Activated CD4-positive, alpha-beta T cell treated with anti-CD3 and anti-CD28 coated beads for 36 hours (primary cell): ENCODE measurements at regions of chr4 and their contacts with region 1.

Region 1: GRCh38 chr4:70993181-70994068 is at the start of gene DCK:
- DNase-seq: peak; percentile 91
- ATAC-seq: peak; percentile 86
- H3K4me3 Mint-ChIP-seq: peak within 1 kb of the TSS; percentile 96
- H3K27ac Mint-ChIP-seq: peak within 1 kb of the TSS; percentile 92
- H3K4me1 Mint-ChIP-seq: peaks cover 39% of the 10 kb centered on the region
- H3K27me3 Mint-ChIP-seq: no peaks in the 10 kb centered on the region
- total RNA-seq, gene DCK: 29.2 to 34.4 TPM

Region 2: DNA sequence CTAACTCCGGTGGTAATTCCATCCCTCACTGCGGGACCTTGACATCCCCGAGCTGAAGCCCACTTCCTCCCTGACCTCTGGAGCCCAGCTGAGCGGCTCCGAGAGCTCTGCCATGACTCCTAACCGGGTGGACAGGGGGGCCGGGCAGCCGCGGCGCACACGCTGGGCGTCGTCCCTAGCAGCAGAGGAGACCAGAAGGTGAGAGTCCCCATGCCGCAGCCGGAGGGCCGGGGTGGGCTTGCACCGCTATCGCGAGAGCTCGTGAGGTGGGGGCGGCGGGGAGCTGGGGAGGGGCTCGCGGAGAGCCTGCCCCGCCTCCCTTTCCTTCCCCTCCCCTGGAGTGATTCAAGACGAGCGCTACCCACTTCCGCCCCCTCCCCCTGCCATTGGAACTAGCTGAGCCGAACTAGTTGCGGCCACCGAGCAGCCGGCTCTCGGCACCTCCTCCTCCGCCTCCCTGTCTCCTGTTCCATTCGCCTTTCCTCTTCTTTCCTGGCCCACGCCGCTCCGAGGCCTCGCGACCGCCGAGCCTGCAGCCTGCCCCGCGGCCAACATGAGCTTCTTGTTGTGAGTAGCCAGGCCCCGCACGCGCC is 91.3 kb before region 1 on chr4 and contains the start of gene MOB1B:
- CTCF ChIA-PET with region 1: no interaction called
- POLR2A ChIA-PET with region 1: no interaction called
- intact Hi-C with region 1: loop called (anchors 1 to 2 kb)
- DNase-seq: peak; percentile 94
- ATAC-seq: peak; percentile 96
- H3K4me3 Mint-ChIP-seq: peak within 1 kb of the TSS; percentile 96
- H3K27ac Mint-ChIP-seq: peak within 1 kb of the TSS; percentile 89
- H3K4me1 Mint-ChIP-seq: peaks cover 27% of the 10 kb centered on the region
- H3K27me3 Mint-ChIP-seq: no peaks in the 10 kb centered on the region
- total RNA-seq, gene MOB1B: 18.5 to 21.9 TPM

Region 3: GRCh38 chr4:70927502-70928137 is 65.8 kb before region 1 on chr4:
- CTCF ChIA-PET with region 1: no interaction called
- POLR2A ChIA-PET with region 1: interaction called, 20 read pairs
- intact Hi-C with region 1: no loop called
- DNase-seq: peak; percentile 70
- ATAC-seq: peak; percentile 75
- H3K4me3 Mint-ChIP-seq: peak overlapping the region; percentile 33
- H3K27ac Mint-ChIP-seq: peak overlapping the region; percentile 78
- H3K4me1 Mint-ChIP-seq: peaks cover 43% of the 10 kb centered on the region
- H3K27me3 Mint-ChIP-seq: no peaks in the 10 kb centered on the region

Region 4: DNA sequence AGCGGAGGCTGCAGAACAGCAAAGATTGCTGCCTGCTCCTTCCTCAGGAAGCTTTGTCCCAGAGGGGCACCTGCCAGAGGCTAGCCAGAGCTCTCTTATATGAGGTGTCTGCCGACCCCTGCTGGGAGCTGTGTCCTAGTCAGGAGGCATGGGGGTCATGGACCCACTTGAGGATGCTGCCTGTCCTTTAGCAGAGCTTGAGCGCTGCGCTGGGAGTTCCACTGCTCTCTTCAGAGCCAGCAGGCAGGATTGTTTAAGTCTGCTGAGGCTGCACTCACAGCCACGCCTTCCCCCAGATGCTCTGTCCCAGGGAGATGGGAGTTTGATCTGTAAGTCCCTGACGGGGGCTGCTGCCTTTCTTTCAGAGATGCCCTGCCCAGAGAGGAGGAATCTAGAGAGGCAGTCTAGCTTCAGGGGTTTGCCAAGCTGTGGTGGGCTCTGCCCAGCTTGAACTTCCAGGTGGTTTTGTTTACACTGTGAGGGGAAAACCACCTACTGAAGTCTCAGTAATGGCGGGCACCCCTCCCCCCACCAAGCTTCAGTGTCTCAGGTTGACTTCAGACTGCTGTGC is 10.9 kb after region 1 on chr4:
- CTCF ChIA-PET with region 1: interaction called, 67 read pairs
- POLR2A ChIA-PET with region 1: interaction called, 13 read pairs
- intact Hi-C with region 1: loop called (anchors 1 kb)
- DNase-seq: peak; percentile 79
- ATAC-seq: peak; percentile 48
- H3K4me3 Mint-ChIP-seq: peak overlapping the region; percentile 21
- H3K27ac Mint-ChIP-seq: peak overlapping the region; percentile 81
- H3K4me1 Mint-ChIP-seq: peaks cover 84% of the 10 kb centered on the region
- H3K27me3 Mint-ChIP-seq: no peaks in the 10 kb centered on the region